ENCODE measurements at regions of chr4 and their contacts with region 1.

Region 1: DNA sequence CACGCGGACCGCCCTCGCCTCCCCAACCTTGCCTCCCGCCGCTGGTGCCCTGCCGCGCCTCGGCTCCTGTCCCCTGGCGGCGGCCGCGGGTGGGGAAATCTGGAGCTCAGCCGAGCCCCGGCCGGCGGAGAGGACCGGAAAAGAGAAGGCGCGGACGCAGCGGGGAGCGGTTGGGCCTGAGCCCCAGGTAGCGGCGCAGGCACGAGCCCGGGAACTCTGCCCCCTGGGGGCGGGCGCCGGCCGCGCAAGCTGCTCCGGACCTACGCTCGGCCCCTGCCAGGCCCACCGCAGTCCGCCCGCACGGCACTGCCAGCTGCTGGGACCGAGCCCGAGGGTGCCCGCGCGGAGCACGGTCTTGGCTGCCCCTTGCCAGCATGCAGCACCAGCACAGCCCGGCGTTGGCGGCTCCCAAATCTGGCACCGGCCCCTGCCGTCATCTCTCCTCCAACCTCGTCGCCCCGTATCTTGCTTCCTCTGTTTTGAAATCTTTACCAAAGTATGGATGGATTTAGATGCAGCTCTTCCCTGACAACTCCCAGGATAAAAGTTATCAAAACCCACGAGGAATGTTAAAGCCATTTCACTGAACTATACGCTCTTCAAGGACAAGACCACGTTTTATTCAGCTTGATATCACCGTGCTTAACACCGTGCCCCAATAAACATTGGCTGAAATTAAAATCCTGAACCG is at the start of gene PRSS12:
- DNase-seq: peak; percentile 75
- ATAC-seq: peak; percentile 90
- H3K4me3 ChIP-seq: peak within 1 kb of the TSS; percentile 92
- H3K27ac ChIP-seq: peak within 1 kb of the TSS; percentile 85
- H3K4me1 ChIP-seq: peaks cover 8% of the 10 kb centered on the region
- H3K27me3 ChIP-seq: no peaks in the 10 kb centered on the region
- CTCF ChIP-seq: peak; percentile 78
- POLR2A ChIP-seq: no peak
- RAD21 ChIP-seq: peak; percentile 57
- total RNA-seq, gene PRSS12: 51.1 and 62.2 TPM in 2 replicates

Region 2: DNA sequence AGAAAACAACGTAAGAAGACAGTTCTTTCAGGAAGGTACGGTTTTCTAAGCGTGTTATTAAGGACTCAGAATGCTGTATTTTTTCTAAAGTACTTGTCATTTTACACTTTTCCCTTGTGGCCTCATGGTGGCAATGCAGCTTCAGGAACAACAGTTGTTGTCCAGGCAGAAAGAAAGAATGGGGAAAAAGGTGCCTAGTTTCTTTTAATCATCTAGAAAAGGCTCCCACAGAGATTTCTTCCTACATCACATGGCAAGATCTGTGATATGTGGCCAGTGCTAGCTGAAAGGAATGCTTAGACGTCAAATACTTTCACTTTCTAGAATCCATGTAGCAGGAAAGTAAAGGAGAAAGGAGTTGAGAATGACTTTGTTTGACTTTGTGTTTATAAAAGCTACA is 1218.6 kb before region 1 on chr4:
- CTCF ChIA-PET with region 1: no interaction called
- POLR2A ChIA-PET with region 1: no interaction called
- dilution Hi-C with region 1: no loop called
- in situ Hi-C with region 1: no loop called
- intact Hi-C with region 1: no loop called
- DNase-seq: peak; percentile 84
- ATAC-seq: peak; percentile 82
- H3K4me3 ChIP-seq: no peak overlapping the region
- H3K27ac ChIP-seq: no peak overlapping the region
- H3K4me1 ChIP-seq: no peaks in the 10 kb centered on the region
- H3K27me3 ChIP-seq: no peaks in the 10 kb centered on the region
- CTCF ChIP-seq: peak; percentile 77
- POLR2A ChIP-seq: no peak
- RAD21 ChIP-seq: peak; percentile 93

Region 3: GRCh38 chr4:117654079-117654478 is 698.9 kb before region 1 on chr4:
- CTCF ChIA-PET with region 1: no interaction called
- POLR2A ChIA-PET with region 1: no interaction called
- dilution Hi-C with region 1: no loop called
- in situ Hi-C with region 1: no loop called
- intact Hi-C with region 1: no loop called
- DNase-seq: no peak
- ATAC-seq: no peak
- H3K4me3 ChIP-seq: no peak overlapping the region
- H3K27ac ChIP-seq: no peak overlapping the region
- H3K4me1 ChIP-seq: no peaks in the 10 kb centered on the region
- H3K27me3 ChIP-seq: no peaks in the 10 kb centered on the region
- CTCF ChIP-seq: no peak
- POLR2A ChIP-seq: no peak
- RAD21 ChIP-seq: no peak

Region 4: DNA sequence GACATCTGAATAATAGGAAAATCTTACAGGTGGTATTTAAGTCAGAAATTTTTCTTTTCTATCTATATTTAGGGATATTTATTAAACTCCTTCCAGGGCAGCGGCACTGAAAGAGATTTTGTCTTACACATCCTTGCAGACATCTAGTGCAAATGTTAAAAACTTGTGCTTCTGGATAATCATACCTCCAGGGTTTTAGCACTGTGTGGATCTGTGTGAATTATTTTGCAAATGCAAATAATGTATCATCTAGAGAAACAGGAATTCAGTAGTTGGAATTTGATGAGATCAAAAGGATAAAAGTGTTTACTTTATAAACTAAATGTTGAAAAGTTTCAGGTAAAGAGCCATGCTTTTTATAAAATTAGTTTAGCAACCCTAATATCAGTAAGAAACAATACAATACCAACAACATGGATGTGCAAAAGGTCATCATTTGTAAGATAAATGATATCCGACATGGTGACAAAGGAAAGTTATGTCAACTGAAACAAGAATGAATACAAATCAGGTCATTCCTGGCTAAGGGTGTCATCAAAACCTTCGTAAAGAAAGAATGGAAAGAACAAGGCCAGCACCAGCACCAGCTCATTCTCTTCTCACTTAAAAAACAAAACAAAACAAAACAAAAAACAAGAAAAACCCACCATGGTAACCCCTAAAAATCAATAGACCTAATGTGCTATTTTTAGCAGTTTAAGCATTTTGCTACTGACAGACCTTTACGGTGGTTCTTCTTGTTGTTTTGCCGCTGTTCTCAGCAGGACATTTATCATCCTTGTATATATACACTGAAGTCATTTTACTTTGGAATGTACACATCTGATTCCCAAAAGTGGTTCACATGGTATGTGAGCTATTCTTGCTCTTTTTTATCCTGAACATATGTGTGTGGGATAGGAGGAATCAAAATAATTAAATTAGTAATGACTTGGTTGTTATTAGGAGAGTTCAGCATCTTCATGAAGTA is 538.4 kb before region 1 on chr4:
- CTCF ChIA-PET with region 1: no interaction called
- POLR2A ChIA-PET with region 1: no interaction called
- dilution Hi-C with region 1: no loop called
- in situ Hi-C with region 1: no loop called
- intact Hi-C with region 1: no loop called
- DNase-seq: peak; percentile 20
- ATAC-seq: peak; percentile 57
- H3K4me3 ChIP-seq: no peak overlapping the region
- H3K27ac ChIP-seq: no peak overlapping the region
- H3K4me1 ChIP-seq: peaks cover 5% of the 10 kb centered on the region
- H3K27me3 ChIP-seq: no peaks in the 10 kb centered on the region
- CTCF ChIP-seq: no peak
- POLR2A ChIP-seq: no peak
- RAD21 ChIP-seq: no peak

Region 5: DNA sequence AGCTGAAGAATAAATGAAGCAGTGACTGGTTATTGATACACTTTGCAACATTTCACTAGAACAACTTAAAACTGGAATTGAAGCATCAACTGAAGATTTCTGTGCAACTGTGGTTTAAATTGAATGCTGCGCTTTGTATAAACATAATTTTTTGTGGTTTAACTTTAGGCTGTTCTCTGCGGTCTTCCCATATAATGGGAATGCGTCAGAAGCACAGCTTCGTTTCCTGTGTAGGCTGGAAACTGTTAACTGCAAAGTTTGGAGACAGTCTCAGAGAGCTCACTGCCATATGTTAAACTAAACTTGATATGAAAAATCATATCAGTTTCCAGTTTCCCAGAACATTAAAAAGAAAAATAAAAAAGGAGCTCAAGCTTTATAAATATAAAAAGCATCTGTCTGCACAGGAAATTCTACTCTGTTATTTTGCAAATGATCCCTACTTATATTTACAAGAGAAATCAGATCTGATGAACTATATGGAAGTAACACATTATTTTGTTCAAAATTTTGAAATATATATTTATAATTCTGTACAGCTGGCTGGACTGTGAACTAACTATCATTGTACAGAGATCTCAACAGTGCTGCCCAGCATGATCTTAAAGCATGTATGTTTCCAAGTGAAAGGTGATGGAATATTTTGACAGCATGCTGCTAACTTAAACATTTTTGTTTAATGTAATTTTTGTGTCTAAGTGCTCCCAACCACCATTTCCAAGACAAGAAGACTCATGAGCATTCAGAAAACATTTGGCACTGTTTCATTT is 178.8 kb before region 1 on chr4:
- CTCF ChIA-PET with region 1: no interaction called
- POLR2A ChIA-PET with region 1: no interaction called
- dilution Hi-C with region 1: no loop called
- in situ Hi-C with region 1: no loop called
- intact Hi-C with region 1: loop called (anchors 10 kb)
- DNase-seq: peak; percentile 96
- ATAC-seq: peak; percentile 96
- H3K4me3 ChIP-seq: no peak overlapping the region
- H3K27ac ChIP-seq: peak overlapping the region; percentile 78; the same call in 1 of the 2 replicates
- H3K4me1 ChIP-seq: peaks cover 13% of the 10 kb centered on the region
- H3K27me3 ChIP-seq: no peaks in the 10 kb centered on the region
- CTCF ChIP-seq: no peak
- POLR2A ChIP-seq: no peak
- RAD21 ChIP-seq: no peak

Region 6: DNA sequence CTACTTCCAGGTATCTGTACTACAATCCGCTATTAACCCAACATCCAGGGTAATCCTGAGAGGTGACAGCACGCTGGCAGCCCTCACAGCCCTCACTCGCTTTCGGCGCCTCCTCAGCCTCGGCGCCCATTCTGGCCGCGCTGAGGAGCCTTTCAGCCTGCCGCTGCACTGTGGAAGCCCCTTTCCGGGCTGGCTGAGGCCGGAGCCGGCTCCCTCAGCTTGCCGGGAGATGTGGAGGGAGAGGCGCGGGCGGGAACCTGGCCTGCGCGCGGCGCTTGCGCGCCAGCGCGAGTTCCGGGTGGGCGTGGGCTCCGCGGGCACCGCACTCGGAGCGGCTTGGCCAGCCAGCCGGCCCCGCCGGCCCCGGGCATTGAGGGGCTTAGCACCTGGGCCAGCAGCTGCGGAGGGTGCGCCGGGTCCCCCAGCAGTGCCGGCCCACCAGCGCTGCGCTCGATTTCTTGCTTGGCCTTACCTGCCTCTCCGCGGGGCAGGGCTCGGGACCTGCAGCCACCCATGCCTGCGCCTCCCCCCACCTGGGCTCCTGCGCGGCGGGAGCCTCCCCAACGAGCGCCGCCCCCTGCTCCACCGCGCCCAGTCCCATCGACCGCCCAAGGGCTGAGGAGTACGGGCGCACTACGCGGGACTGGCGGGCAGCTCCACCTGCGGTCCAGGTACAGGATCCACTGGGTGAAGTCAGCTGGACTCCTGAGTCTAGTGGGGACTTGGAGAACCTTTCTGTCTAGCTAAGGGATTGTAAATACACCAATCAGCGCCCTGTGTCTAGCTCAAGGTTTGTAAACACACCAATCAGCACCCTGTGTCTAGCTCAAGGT is 87.5 kb before region 1 on chr4:
- CTCF ChIA-PET with region 1: no interaction called
- POLR2A ChIA-PET with region 1: no interaction called
- dilution Hi-C with region 1: no loop called
- in situ Hi-C with region 1: no loop called
- intact Hi-C with region 1: no loop called
- DNase-seq: no peak
- ATAC-seq: peak; percentile 72
- H3K4me3 ChIP-seq: peak overlapping the region; percentile 53
- H3K27ac ChIP-seq: no peak overlapping the region; the same call in 1 of the 2 replicates
- H3K4me1 ChIP-seq: no peaks in the 10 kb centered on the region
- H3K27me3 ChIP-seq: no peaks in the 10 kb centered on the region
- CTCF ChIP-seq: no peak
- POLR2A ChIP-seq: no peak
- RAD21 ChIP-seq: no peak

Region 7: DNA sequence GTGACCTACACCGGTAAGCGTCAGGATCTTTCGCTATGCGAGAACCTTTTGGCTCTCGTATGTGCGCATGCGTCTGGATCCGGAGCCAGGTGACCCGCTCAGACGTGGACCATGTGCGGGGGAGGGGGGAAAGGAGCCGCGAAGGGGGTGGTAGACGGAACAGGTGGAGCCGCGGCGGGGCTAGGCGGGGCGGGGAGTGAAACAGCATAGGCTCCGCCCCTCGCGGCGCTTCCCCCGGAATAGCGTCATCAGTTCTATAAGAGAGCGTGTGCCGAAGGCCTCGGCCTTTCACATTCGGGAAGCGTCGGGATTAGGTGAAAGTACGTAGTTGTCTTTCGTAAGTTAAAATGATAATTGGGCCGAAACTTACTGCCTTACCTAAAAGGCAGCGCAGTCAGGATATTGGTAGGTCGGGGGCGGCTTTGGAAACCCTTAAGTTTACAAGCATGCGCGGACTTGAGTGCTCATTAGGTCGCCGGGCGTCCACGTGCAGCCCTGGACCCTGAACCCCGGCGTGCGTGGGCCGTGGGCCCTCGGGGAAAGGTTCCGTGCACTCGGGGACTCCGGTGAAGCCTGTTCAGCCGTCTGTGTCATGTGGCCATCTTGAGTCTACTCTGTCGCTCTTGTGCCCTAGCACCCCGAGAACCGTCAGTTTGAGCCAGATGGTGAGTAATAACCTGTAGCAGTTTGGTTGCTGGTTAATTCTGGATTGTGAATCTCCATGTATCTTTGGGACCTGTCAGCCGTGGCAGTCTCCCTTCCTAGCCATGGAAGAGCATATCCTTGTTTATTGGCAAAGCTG is 74.3 kb before region 1 on chr4:
- CTCF ChIA-PET with region 1: interaction called, 4 read pairs
- POLR2A ChIA-PET with region 1: interaction called, 4 read pairs
- dilution Hi-C with region 1: no loop called
- in situ Hi-C with region 1: no loop called
- intact Hi-C with region 1: loop called (anchors 1 kb)
- DNase-seq: peak; percentile 88
- ATAC-seq: peak; percentile 87
- H3K4me3 ChIP-seq: peak overlapping the region; percentile 72
- H3K27ac ChIP-seq: peak overlapping the region; percentile 71
- H3K4me1 ChIP-seq: peaks cover 8% of the 10 kb centered on the region
- H3K27me3 ChIP-seq: no peaks in the 10 kb centered on the region
- CTCF ChIP-seq: no peak
- POLR2A ChIP-seq: peak; percentile 98
- RAD21 ChIP-seq: no peak

Region 8: DNA sequence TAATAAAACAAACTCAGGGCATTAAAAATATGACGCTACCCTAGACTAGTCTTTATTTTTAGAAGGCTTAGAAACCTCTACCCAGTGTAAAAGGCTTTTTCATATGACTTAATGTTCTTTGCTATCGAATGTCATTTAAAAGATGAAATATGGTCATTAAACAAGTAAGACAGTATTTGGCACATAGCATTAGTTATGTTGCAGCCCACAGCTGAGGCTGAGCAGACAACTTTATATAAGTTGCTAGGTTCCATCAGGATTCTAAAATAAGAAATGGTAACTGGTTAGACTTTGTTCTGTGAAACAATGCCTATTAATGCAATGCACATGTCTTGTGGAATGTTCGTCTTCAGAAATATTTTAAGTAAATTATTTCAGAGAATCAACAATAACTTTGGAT is 10.2 kb after region 1 on chr4:
- CTCF ChIA-PET with region 1: interaction called, 17 read pairs
- POLR2A ChIA-PET with region 1: interaction called, 4 read pairs
- dilution Hi-C with region 1: no loop called
- in situ Hi-C with region 1: no loop called
- intact Hi-C with region 1: no loop called
- DNase-seq: no peak
- ATAC-seq: no peak
- H3K4me3 ChIP-seq: no peak overlapping the region
- H3K27ac ChIP-seq: no peak overlapping the region
- H3K4me1 ChIP-seq: peaks cover 3% of the 10 kb centered on the region
- H3K27me3 ChIP-seq: no peaks in the 10 kb centered on the region
- CTCF ChIP-seq: no peak
- POLR2A ChIP-seq: no peak
- RAD21 ChIP-seq: no peak

Region 9: GRCh38 chr4:118417325-118417724 is 64.3 kb after region 1 on chr4:
- CTCF ChIA-PET with region 1: no interaction called
- POLR2A ChIA-PET with region 1: no interaction called
- dilution Hi-C with region 1: no loop called
- in situ Hi-C with region 1: no loop called
- intact Hi-C with region 1: loop called (anchors 5 kb)
- DNase-seq: peak; percentile 85
- ATAC-seq: peak; percentile 96
- H3K4me3 ChIP-seq: no peak overlapping the region
- H3K27ac ChIP-seq: peak overlapping the region; percentile 96; the same call in 1 of the 2 replicates
- H3K4me1 ChIP-seq: peaks cover 2% of the 10 kb centered on the region; the same call in 1 of the 2 replicates
- H3K27me3 ChIP-seq: no peaks in the 10 kb centered on the region
- CTCF ChIP-seq: no peak
- POLR2A ChIP-seq: no peak
- RAD21 ChIP-seq: no peak

Measured in IMR-90 (cell line).